Heart left ventricle (tissue), 16 donors: ENCODE measurements at regions of chr12 and their contacts with region 1.

Region 1: DNA sequence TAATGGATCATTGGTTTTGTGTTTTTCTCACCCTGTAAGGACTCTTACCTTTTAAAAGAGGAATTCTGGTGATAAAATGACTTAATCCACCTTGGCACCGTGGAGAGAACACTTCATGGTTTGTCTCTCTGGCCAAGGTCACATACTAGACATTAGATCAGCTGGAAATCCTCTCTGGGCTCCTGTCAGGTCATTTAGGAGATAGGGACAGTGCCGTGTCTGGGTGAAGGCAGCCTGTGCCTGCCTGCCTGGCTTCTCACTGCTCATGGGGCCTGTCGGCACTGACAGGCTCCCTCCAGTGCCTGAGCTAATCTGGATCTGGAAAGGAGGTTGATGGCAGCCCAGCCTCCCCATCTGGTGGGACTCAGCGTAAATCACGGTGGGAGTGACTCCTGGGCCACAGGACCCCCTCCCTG is 5.7 kb downstream of the CRADD start:
- DNase-seq: peak in 4 of 5 donors; percentile 55 to 78 (median 71)
- ATAC-seq: peak; percentile 82 to 91 (median 86)
- H3K4me3 ChIP-seq: peak overlapping the region in 1 of 12 donors; percentile 8
- H3K27ac ChIP-seq: peak overlapping the region; percentile 64 to 100 (median 84)
- H3K4me1 ChIP-seq: peaks cover 0 to 82% (median 37%) of the 10 kb centered on the region in 12 donors
- H3K27me3 ChIP-seq: no peaks in the 10 kb centered on the region
- CTCF ChIP-seq: no peak
- POLR2A ChIP-seq: no peak

Region 2: DNA sequence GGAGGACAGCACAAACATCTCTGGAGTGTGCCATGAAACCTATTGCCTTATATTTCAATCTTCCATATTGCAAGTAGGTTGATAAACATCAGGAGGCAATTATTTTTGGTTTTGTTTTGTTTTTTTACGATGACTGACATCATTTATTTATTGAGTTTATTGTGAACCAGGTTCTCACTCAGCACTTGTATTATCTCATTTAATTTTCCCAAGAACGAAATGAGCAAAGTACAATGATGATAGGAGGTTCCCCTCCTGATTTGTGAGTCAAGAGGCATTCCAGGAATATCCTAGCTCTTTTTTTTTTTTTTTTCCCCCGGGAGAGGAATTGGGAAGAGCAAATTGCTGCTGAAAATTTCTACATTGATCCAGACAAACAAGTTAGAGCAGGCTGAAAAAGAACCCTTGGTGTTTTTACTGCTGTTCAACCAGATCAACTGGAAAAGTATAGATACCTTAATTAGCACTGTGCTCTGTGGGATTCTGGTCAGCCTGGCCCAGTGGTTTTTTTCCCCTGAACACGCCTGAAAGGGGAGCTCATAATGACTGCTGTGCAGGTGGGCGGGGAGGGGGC is 105.5 kb before region 1 on chr12:
- intact Hi-C with region 1: loop called in 4 of 10 experiments (anchors 5 kb)
- DNase-seq: no peak
- ATAC-seq: no peak
- H3K4me3 ChIP-seq: peak overlapping the region in 2 of 12 donors; percentile 66 to 71
- H3K27ac ChIP-seq: peak overlapping the region in 4 of 12 donors; percentile 21 to 98 (median 29)
- H3K4me1 ChIP-seq: peaks cover 0 to 66% (median 41%) of the 10 kb centered on the region in 12 donors
- H3K27me3 ChIP-seq: peaks cover 0 to 26% (median 0%) of the 10 kb centered on the region in 9 donors
- CTCF ChIP-seq: no peak
- POLR2A ChIP-seq: no peak

Region 3: DNA sequence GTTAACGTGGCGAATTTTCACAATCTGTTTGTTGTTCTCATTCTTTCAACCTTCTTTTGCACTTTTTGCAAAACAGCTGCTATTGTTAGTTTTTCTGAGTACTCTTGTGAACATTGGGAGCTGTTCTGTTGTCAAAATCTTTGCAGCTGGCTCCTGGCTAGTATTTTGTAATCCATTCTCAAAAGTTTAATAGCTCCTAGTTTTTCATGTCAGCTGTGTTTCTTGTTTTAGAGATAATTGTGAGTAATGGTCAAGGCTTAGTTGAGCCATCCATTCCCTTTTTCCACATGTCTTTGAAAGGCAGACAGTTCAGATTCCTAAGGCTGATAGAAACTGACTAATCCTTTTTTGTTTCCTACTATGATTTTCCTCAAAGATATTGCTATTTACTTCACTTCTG is 44.8 kb before region 1 on chr12:
- intact Hi-C with region 1: no loop called
- DNase-seq: no peak
- ATAC-seq: no peak
- H3K4me3 ChIP-seq: no peak overlapping the region
- H3K27ac ChIP-seq: no peak overlapping the region
- H3K4me1 ChIP-seq: no peaks in the 10 kb centered on the region
- H3K27me3 ChIP-seq: no peaks in the 10 kb centered on the region
- CTCF ChIP-seq: no peak
- POLR2A ChIP-seq: no peak

Region 4: GRCh38 chr12:93742110-93742934 is 59.5 kb after region 1 on chr12:
- intact Hi-C with region 1: loop called (anchors 1 to 5 kb)
- DNase-seq: peak; percentile 73 to 85 (median 80)
- ATAC-seq: peak; percentile 78 to 97 (median 92)
- H3K4me3 ChIP-seq: peak overlapping the region; percentile 33 to 70 (median 64)
- H3K27ac ChIP-seq: peak overlapping the region; percentile 88 to 95 (median 93)
- H3K4me1 ChIP-seq: peaks cover 0 to 85% (median 60%) of the 10 kb centered on the region in 12 donors
- H3K27me3 ChIP-seq: no peaks in the 10 kb centered on the region
- CTCF ChIP-seq: peak in 9 of 12 donors; percentile 17 to 54 (median 36)
- POLR2A ChIP-seq: peak in 1 of 2 donors; percentile 13